ENCODE measurements at regions of chr10 and their contacts with region 1.

Region 1: GRCh38 chr10:67697724-67698131 is 1.7 kb upstream of the CTNNA3 start:
- DNase-seq: no peak
- ATAC-seq: peak; percentile 92
- H3K4me3 ChIP-seq: no peak overlapping the region
- H3K27ac ChIP-seq: no peak overlapping the region
- H3K4me1 ChIP-seq: 0 out of 2 replicates have a peak, but pooled peaks cover 3% of the 10 kb centered on the region
- H3K27me3 ChIP-seq: no peaks in the 10 kb centered on the region; a peak in 1 of 4 replicates
- CTCF ChIP-seq: peak; percentile 59 to 75 (median 65)
- EP300 ChIP-seq: no peak
- POLR2A ChIP-seq: no peak
- RAD21 ChIP-seq: peak; percentile 80

Region 2: DNA sequence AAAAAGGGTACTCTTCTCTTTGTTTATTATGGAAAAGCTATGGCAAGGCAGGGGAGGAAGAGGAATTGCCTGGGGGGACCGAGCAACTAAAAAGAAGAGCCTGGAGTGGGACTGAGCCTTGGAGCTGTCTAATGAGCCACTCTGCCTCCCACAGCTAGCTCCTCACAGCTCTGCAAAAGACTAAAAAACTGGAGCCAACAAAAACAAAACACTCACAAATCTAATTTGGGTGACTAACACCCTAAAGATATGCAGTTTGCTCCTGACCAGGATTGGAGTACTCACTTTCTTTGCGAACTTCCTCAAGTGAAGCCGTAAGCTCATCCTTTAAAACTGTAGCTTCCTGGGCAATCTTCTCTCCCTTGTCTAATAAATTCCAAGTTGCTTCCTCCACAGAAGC is 91.2 kb before region 1 on chr10:
- CTCF ChIA-PET with region 1: interaction called, 13 read pairs
- POLR2A ChIA-PET with region 1: interaction called, 4 read pairs
- RAD21 ChIA-PET with region 1: interaction called, 7 read pairs
- SMC1A ChIA-PET with region 1: interaction called, 7 read pairs
- in situ Hi-C with region 1: no loop called
- intact Hi-C with region 1: no loop called
- DNase-seq: no peak
- ATAC-seq: no peak
- H3K4me3 ChIP-seq: no peak overlapping the region
- H3K27ac ChIP-seq: no peak overlapping the region
- H3K4me1 ChIP-seq: no peaks in the 10 kb centered on the region
- H3K27me3 ChIP-seq: no peaks in the 10 kb centered on the region
- CTCF ChIP-seq: no peak
- EP300 ChIP-seq: no peak
- POLR2A ChIP-seq: no peak
- RAD21 ChIP-seq: no peak

Region 3: DNA sequence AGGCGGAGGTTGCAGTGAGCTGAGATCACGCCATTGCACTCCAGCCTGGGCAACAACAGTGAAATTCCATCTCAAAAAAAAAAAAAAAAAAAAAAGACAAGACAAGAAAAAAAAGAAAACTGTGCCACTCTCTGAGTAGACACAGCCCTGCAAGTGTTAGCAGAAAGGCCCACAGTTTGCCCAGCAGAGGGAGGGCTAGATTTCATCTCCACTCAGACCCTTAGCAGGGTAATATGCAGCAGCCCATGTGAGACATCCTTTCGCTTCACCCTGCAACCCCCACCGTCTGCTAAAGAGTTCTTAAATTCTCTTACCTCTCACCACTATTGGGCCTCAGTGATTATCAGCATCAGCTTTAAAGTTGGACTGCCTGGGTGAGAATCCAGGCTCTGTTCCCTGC is 40.0 kb before region 1 on chr10:
- CTCF ChIA-PET with region 1: interaction called, 153 read pairs
- POLR2A ChIA-PET with region 1: no interaction called
- RAD21 ChIA-PET with region 1: interaction called, 3 read pairs
- SMC1A ChIA-PET with region 1: interaction called, 122 read pairs
- in situ Hi-C with region 1: no loop called
- intact Hi-C with region 1: no loop called
- DNase-seq: no peak
- ATAC-seq: peak; percentile 64
- H3K4me3 ChIP-seq: no peak overlapping the region
- H3K27ac ChIP-seq: no peak overlapping the region
- H3K4me1 ChIP-seq: no peaks in the 10 kb centered on the region
- H3K27me3 ChIP-seq: no peaks in the 10 kb centered on the region
- CTCF ChIP-seq: no peak
- EP300 ChIP-seq: no peak
- POLR2A ChIP-seq: no peak
- RAD21 ChIP-seq: no peak

Region 4: DNA sequence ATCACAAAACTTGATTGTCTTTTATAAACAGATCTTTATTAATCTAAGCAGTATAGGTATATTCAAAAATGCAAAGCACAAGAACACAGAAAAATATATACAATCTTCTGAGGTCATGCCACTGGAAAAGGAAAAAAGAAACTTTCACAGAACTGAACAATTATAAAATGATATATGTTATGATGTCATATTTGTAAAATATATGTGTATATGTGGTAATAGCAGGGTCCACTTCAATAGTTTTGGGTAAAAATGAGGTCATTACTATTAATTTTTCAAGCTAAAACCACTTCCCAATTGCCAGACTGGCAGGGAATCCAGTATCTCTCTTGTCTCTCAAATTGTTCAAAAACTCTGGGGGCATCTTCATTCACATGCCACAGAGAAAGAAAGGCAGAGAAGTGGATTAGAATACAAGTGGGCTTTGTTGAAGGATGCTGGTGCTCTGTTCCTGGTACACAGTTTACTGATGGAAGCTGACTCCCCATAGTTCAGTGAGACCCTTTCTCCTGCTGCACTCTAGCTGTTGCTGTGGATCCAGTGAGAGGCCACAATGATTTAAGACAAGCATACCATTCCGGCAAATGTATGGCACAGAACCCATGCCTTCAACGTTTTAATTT is 21.4 kb before region 1 on chr10:
- CTCF ChIA-PET with region 1: interaction called, 19 read pairs
- POLR2A ChIA-PET with region 1: interaction called, 3 read pairs
- RAD21 ChIA-PET with region 1: interaction called, 7 read pairs
- SMC1A ChIA-PET with region 1: interaction called, 25 read pairs
- in situ Hi-C with region 1: no loop called
- intact Hi-C with region 1: no loop called
- DNase-seq: no peak
- ATAC-seq: no peak
- H3K4me3 ChIP-seq: no peak overlapping the region
- H3K27ac ChIP-seq: no peak overlapping the region
- H3K4me1 ChIP-seq: no peaks in the 10 kb centered on the region
- H3K27me3 ChIP-seq: peaks cover 0 to 3% of the 10 kb centered on the region in 2 experiments; a peak in 1 of 4 replicates
- CTCF ChIP-seq: no peak
- EP300 ChIP-seq: no peak
- POLR2A ChIP-seq: no peak
- RAD21 ChIP-seq: no peak

Region 5: DNA sequence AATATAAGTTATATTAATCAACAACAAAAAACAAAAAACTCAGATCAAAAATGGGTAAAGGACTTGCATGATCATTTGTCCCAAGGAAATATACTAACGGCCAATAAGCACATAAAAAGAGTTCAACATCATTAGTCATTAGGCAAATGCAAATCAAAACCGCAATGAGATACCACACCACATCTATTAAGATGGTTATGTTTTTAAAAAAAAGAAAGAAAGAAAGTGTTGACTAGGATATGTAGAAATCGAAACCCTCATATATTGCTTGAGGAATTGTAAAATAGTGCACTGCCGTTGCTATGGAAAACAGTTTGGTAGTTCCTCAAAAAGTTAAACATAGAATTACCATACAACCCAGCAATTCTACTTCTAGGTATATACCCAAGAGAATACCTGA is 37.7 kb after region 1 on chr10:
- CTCF ChIA-PET with region 1: interaction called, 11 read pairs
- POLR2A ChIA-PET with region 1: interaction called, 4 read pairs
- RAD21 ChIA-PET with region 1: no interaction called
- SMC1A ChIA-PET with region 1: no interaction called
- in situ Hi-C with region 1: no loop called
- intact Hi-C with region 1: no loop called
- DNase-seq: no peak
- ATAC-seq: peak; percentile 78
- H3K4me3 ChIP-seq: no peak overlapping the region
- H3K27ac ChIP-seq: no peak overlapping the region
- H3K4me1 ChIP-seq: no peaks in the 10 kb centered on the region
- H3K27me3 ChIP-seq: no peaks in the 10 kb centered on the region; a peak in 1 of 4 replicates
- CTCF ChIP-seq: no peak
- EP300 ChIP-seq: no peak
- POLR2A ChIP-seq: no peak
- RAD21 ChIP-seq: no peak

Region 6: DNA sequence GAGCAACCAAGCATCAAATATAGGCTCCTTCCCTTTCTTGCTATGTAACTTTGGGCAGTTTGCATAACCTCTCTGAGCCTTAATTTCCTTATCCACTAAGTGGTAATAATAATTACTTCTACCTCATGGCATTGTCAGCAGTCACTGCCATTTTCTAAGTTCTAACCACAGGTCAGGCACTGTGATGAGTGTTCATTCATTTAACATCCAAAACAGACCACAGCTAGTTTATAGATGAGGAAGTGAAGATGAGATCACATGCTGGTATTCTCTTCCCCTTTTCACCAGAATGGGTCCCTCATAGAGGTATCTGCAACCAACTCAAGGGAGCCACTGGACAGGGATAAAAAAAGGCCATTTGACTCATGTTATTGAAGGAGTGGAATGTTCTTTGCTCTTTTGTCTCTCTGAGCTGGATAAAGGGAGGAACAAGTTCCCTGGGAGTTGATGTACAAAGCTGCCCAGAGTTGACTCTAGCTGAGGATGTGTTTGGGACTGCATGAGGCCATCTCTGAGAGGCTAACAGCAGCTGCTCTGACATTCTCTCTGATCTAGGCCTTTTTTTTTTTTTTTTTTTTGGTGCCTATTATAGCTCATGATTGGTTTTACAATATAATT is 75.3 kb after region 1 on chr10:
- CTCF ChIA-PET with region 1: interaction called, 573 read pairs
- POLR2A ChIA-PET with region 1: interaction called, 17 read pairs
- RAD21 ChIA-PET with region 1: interaction called, 292 read pairs
- SMC1A ChIA-PET with region 1: interaction called, 448 read pairs
- in situ Hi-C with region 1: loop called (anchors 5 kb)
- intact Hi-C with region 1: no loop called
- DNase-seq: peak; percentile 90
- ATAC-seq: peak; percentile 93
- H3K4me3 ChIP-seq: no peak overlapping the region
- H3K27ac ChIP-seq: peak overlapping the region; percentile 82
- H3K4me1 ChIP-seq: peaks cover 42% of the 10 kb centered on the region
- H3K27me3 ChIP-seq: no peaks in the 10 kb centered on the region
- CTCF ChIP-seq: no peak
- EP300 ChIP-seq: peak; percentile 87 to 96
- POLR2A ChIP-seq: no peak
- RAD21 ChIP-seq: no peak

Region 7: DNA sequence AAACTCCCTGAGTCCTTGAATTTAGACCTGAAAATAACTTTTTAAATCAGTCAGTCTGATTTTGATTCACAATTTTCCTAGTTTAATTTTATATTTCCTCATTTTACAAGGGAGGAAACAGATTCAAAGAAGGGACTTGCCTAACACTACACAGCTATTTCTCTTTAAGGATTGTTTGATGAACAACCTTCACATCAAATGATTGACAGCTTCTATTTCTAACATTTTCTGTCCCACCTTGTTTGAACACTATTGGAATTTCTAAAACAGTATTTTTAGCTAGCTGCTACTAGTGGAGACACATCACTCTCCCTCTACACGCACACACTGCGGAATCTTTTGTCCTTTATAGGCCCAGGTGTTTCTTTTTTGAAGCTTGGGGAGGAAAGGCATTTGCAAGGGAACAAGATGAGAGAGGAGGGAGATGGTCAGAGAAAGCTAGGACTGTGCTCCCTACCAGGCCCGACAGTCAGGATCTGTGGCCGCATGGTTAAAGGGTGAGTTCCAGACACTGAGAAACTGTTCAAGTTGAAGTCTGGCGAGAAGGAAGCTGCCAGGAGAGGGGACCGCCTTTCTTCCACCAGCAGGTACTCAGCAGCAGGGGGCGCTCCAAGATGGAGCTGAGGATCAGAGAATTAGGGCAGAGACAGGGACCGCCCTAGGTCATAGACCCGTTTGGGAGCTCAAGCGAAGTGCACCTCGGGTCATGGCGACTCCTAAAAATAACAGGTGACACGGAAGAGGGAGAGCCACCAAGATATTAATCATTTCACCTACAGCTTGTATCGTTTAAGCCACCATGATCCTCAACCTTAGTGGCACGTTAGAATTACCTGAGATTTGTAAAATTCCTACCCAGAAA is 90.5 kb after region 1 on chr10:
- CTCF ChIA-PET with region 1: interaction called, 34 read pairs
- POLR2A ChIA-PET with region 1: no interaction called
- RAD21 ChIA-PET with region 1: interaction called, 12 read pairs
- SMC1A ChIA-PET with region 1: interaction called, 14 read pairs
- in situ Hi-C with region 1: no loop called
- intact Hi-C with region 1: no loop called
- DNase-seq: no peak
- ATAC-seq: peak; percentile 84
- H3K4me3 ChIP-seq: no peak overlapping the region
- H3K27ac ChIP-seq: no peak overlapping the region
- H3K4me1 ChIP-seq: peaks cover 20% of the 10 kb centered on the region
- H3K27me3 ChIP-seq: no peaks in the 10 kb centered on the region
- CTCF ChIP-seq: peak; percentile 73 to 85 (median 83)
- EP300 ChIP-seq: no peak
- POLR2A ChIP-seq: no peak
- RAD21 ChIP-seq: peak; percentile 84

Region 8: GRCh38 chr10:68073631-68074403 is 376.1 kb after region 1 on chr10:
- CTCF ChIA-PET with region 1: no interaction called
- POLR2A ChIA-PET with region 1: no interaction called
- RAD21 ChIA-PET with region 1: no interaction called
- SMC1A ChIA-PET with region 1: no interaction called
- in situ Hi-C with region 1: no loop called
- intact Hi-C with region 1: no loop called
- DNase-seq: no peak
- ATAC-seq: peak; percentile 19
- H3K4me3 ChIP-seq: peak overlapping the region; percentile 89
- H3K27ac ChIP-seq: peak overlapping the region; percentile 92
- H3K4me1 ChIP-seq: 0 out of 2 replicates have a peak, but pooled peaks cover 3% of the 10 kb centered on the region
- H3K27me3 ChIP-seq: no peaks in the 10 kb centered on the region
- CTCF ChIP-seq: no peak
- EP300 ChIP-seq: no peak
- POLR2A ChIP-seq: no peak
- RAD21 ChIP-seq: no peak

Measured in GM12878 (cell line).